MCF 10A (cell line): ENCODE measurements at regions of chr15 and their contacts with region 1.

Region 1: DNA sequence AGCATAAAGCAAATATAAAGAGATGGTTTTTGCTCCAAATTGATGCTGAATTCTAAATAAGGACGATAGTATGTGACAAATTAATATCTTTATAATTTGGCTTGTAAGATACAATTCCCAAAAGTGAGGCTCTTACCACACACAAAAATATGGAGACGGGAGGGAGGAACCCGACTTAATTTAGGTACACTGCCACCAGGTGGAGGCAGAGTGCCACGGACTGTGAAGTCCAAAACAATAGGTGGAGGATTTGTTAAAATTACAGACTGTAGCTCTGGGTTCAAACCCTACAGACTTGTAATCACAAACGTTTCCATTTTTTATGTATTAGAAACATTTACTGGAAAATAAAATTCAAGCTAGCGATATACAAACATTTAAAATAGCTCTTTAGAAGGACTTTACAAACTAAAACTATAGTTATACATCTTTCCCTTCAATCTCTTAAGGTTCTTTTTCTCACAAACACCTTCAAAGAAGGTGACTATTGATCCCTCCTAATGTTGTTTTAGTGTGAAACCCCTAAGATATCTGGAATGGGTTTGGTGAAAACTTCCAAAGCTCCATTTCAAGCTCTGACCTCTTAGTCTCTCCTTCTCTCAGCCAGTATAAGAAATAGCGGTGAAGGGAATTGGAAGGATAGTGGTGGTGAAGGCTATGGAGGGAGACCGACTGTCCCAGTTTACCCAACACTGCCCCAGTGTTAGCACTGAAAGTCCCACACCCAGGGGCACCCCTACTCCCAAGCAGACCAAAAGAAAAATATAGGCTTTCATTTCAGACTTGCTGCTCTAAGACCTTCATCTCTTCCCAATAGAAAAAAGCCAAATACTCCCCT is 89.7 kb downstream of the AQP9 start:
- DNase-seq: peak; percentile 85
- H3K4me3 Mint-ChIP-seq: no peak overlapping the region
- H3K27ac Mint-ChIP-seq: no peak overlapping the region
- H3K4me1 Mint-ChIP-seq: peaks cover 6% of the 10 kb centered on the region
- H3K27me3 Mint-ChIP-seq: no peaks in the 10 kb centered on the region
- CTCF ChIP-seq: peak; percentile 92

Region 2: DNA sequence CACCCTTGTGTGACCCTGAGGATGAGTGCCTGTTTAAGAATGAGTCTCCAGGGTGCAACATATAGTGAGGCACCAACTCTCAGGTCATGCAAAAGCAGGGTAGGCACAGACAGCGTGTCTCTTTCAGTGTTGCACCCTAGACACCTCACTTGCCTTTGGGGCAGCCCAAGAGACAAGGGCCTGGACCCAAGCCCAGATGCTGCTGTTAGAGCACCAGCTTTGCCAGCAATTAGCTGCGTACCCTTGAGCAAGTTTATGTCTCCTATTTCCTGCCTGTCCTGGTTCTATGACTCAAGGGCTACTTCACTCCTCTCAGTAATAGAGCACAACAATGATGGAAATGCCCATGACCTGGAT is 33.0 kb after region 1 on chr15:
- CTCF ChIA-PET with region 1: interaction called, 8 read pairs
- POLR2A ChIA-PET with region 1: interaction called, 10 read pairs
- intact Hi-C with region 1: no loop called
- DNase-seq: peak; percentile 97
- H3K4me3 Mint-ChIP-seq: no peak overlapping the region
- H3K27ac Mint-ChIP-seq: peak overlapping the region; percentile 85
- H3K4me1 Mint-ChIP-seq: peaks cover 38% of the 10 kb centered on the region
- H3K27me3 Mint-ChIP-seq: no peaks in the 10 kb centered on the region
- CTCF ChIP-seq: no peak

Region 3: GRCh38 chr15:58362262-58362922 is 134.5 kb after region 1 on chr15:
- CTCF ChIA-PET with region 1: no interaction called
- POLR2A ChIA-PET with region 1: no interaction called
- intact Hi-C with region 1: no loop called
- DNase-seq: no peak
- H3K4me3 Mint-ChIP-seq: no peak overlapping the region
- H3K27ac Mint-ChIP-seq: no peak overlapping the region
- H3K4me1 Mint-ChIP-seq: peaks cover 7% of the 10 kb centered on the region
- H3K27me3 Mint-ChIP-seq: no peaks in the 10 kb centered on the region
- CTCF ChIP-seq: no peak

Region 4: GRCh38 chr15:58873267-58873666 is 645.3 kb after region 1 on chr15:
- CTCF ChIA-PET with region 1: interaction called, 3 read pairs
- POLR2A ChIA-PET with region 1: interaction called, 4 read pairs
- intact Hi-C with region 1: loop called (anchors 10 kb)
- DNase-seq: peak; percentile 51
- H3K4me3 Mint-ChIP-seq: no peak overlapping the region
- H3K27ac Mint-ChIP-seq: no peak overlapping the region
- H3K4me1 Mint-ChIP-seq: peaks cover 16% of the 10 kb centered on the region
- H3K27me3 Mint-ChIP-seq: no peaks in the 10 kb centered on the region
- CTCF ChIP-seq: no peak

Region 5: DNA sequence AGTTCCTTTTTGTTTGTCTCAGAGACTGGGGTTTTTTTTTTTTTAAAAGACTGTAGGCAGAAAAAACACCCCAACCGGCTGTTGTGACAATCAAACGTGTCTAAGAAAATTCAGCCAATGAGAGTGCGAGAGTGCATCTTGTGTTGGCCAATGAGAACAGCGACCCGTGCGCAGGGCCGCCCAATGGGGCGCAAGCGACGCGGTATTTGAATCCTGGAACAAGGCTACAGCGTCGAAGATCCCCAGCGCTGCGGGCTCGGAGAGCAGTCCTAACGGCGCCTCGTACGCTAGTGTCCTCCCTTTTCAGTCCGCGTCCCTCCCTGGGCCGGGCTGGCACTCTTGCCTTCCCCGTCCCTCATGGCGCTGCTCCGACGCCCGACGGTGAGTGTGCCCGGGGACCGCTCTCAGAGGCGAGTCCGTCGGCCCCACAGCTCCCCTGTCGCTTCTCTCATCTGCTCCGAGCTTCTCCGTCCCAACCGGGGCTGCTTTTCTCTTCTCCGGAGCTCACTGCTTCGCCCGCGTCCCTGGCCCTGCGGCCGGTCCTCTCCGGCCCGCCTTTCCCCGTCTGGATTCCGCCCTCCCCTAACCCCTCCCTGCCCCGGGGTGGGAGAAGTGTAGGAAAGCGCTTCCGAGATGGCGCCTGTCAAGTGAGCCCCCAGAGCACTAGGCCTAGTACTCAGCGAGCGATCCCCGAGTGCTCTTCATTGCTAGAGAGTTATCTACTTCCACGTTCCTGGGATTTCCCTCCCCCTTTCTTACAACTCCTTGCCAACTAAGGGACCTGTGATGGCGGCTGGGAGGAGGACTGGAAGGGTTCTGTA is 877.2 kb after region 1 on chr15 and contains the start of gene CCNB2:
- CTCF ChIA-PET with region 1: interaction called, 5 read pairs
- POLR2A ChIA-PET with region 1: no interaction called
- intact Hi-C with region 1: loop called (anchors 1 kb)
- DNase-seq: peak; percentile 96
- H3K4me3 Mint-ChIP-seq: peak within 1 kb of the TSS; percentile 82
- H3K27ac Mint-ChIP-seq: peak within 1 kb of the TSS; percentile 91
- H3K4me1 Mint-ChIP-seq: peaks cover 7% of the 10 kb centered on the region
- H3K27me3 Mint-ChIP-seq: no peaks in the 10 kb centered on the region
- CTCF ChIP-seq: no peak
- total RNA-seq, gene CCNB2: 25.7 and 54.1 TPM in 2 replicates

Region 6: DNA sequence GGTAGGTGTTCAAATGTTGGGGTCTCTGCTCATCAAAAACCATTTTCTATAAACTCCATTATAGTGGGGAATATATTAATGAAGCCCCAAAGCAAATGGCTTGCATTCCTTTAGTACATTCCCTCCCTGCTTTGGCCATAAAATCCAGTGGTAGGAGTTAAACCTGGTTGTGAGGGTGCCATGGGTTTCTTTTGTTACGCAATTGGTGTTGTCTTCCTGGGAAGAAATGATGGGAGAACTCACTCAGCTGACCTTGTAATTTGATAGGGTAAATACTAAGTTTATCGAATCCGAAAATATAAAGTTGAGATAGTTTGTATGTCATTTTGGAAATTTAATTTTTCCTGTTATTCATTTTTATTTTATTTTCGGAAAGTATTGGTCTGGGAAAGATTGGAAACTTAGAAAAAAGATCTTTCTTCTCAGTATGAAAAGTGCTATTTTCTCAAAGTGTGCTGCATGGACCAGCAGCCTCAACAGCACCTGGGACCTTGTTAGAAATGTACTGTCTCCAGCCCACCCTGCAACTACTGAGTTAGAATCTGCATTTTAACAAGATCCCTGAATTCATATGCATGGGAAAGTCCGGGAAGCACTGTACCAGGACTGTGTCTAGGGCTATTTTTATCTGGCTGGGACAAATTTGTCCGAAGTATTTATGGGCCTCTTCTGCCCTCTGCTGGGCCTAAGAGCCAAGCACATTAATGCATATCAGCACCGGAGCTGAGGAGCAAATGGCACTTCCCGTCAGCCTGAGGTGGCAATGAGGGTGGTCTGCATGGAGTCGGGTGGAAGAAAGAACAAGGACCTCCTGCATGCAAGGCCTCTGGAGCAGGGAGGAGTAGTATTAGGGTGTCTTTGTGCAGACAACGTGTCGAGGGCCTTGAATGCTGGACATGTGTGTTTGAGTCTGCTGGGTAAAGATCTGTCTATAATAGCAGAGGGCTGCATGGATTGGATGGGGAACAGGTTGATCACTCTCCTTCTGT is 1264.8 kb after region 1 on chr15:
- CTCF ChIA-PET with region 1: no interaction called
- POLR2A ChIA-PET with region 1: no interaction called
- intact Hi-C with region 1: loop called (anchors 5 kb)
- DNase-seq: peak; percentile 82
- H3K4me3 Mint-ChIP-seq: no peak overlapping the region
- H3K27ac Mint-ChIP-seq: no peak overlapping the region
- H3K4me1 Mint-ChIP-seq: peaks cover 8% of the 10 kb centered on the region
- H3K27me3 Mint-ChIP-seq: no peaks in the 10 kb centered on the region
- CTCF ChIP-seq: peak; percentile 84